SK-MEL-5 (cell line): ENCODE measurements at regions of chr3 and their contacts with region 1.

Region 1: GRCh38 chr3:33636125-33636850 is 81.8 kb downstream of the CLASP2 start:
- DNase-seq: peak; percentile 78

Region 2: GRCh38 chr3:33737146-33737545 is 100.9 kb after region 1 on chr3:
- in situ Hi-C with region 1: no loop called
- DNase-seq: no peak

Region 3: GRCh38 chr3:33798411-33799201 is 162.3 kb after region 1 on chr3 and contains the start of gene PDCD6IP:
- in situ Hi-C with region 1: loop called (anchors 25 kb)
- DNase-seq: peak; percentile 90
- total RNA-seq, gene PDCD6IP: 107 and 130 TPM in 2 replicates